Ascending aorta (tissue), 2 donors: ENCODE measurements at regions of chr17 and their contacts with region 1.

Region 1: DNA sequence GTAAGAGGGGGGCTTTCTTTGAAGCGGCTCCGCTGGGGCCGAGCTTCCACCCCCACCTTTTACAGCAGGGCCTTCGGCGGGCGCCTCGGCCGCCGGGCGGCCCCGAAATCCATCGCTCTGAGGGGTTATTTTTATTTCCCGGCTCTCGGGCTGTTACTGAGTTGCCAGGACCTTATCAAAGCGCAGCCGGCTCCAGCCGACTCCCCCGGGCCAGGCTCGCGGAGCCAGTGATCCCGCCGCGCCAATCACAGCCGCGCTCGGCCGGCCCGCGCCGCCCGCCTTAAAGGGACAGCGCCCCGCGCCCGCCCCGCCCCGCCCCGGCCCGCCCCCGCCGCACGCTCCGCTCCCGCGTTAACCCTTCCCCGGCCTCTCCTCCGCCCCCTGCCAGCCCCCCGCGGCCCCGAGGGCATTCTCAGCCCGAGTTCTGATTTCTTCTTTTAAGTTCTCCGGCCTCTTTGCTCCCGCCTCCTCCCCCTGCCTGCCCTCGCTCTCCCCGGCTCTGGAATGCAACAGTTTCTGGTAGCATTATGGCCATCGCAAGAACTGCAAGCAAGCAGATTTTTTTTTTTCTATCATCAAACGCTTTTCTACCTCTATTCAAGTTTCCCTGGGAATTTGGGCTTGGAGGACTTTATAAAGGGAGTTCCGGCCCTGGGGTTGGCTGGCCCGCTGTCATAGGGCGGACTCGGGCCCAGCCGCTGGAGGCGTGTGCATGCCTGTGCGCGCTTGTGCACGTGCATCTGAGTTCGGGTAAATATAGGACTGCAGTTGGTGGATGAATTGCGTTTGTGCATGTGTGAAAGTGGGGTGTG is at the start of gene AXIN2:
- DNase-seq: peak; percentile 59 to 94
- H3K4me3 ChIP-seq: peak within 1 kb of the TSS in 1 of 2 donors; percentile 97
- H3K27ac ChIP-seq: peak within 1 kb of the TSS; percentile 90 to 94
- H3K4me1 ChIP-seq: peaks cover 0 to 11% of the 10 kb centered on the region in 2 donors
- H3K27me3 ChIP-seq: no peaks in the 10 kb centered on the region
- CTCF ChIP-seq: peak; percentile 11 to 32 (median 12)
- total RNA-seq, gene AXIN2: 27.5 TPM

Region 2: GRCh38 chr17:65463242-65463641 is 98.4 kb before region 1 on chr17:
- intact Hi-C with region 1: loop called (anchors 1 kb)
- DNase-seq: peak; percentile 71 to 93
- H3K4me3 ChIP-seq: no peak overlapping the region
- H3K27ac ChIP-seq: peak overlapping the region; percentile 68 to 73
- H3K4me1 ChIP-seq: peaks cover 4 to 18% of the 10 kb centered on the region in 2 donors
- H3K27me3 ChIP-seq: no peaks in the 10 kb centered on the region
- CTCF ChIP-seq: no peak